Gastrocnemius medialis (tissue), 4 donors: ENCODE measurements at regions of chr6 and their contacts with region 1.

Region 1: GRCh38 chr6:117482240-117483003 is at the start of gene DCBLD1:
- DNase-seq: peak; percentile 32 to 61
- ATAC-seq: peak; percentile 73 to 83
- H3K4me3 ChIP-seq: peak within 1 kb of the TSS; percentile 65 to 95 (median 82)
- H3K27ac ChIP-seq: peak within 1 kb of the TSS; percentile 89 to 92 (median 91)
- H3K4me1 ChIP-seq: peaks cover 13 to 19% of the 10 kb centered on the region in 2 donors
- H3K27me3 ChIP-seq: no peaks in the 10 kb centered on the region
- CTCF ChIP-seq: peak in 1 of 5 experiments; percentile 26
- POLR2A ChIP-seq: peak; percentile 52 to 75
- total RNA-seq, gene DCBLD1: 4.3 to 8.1 (median 5.2) TPM

Region 2: GRCh38 chr6:117449549-117450439 is 32.6 kb before region 1 on chr6:
- in situ Hi-C with region 1: no loop called
- intact Hi-C with region 1: loop called (anchors 2 kb)
- DNase-seq: peak; percentile 6 to 12
- ATAC-seq: no peak
- H3K4me3 ChIP-seq: no peak overlapping the region
- H3K27ac ChIP-seq: no peak overlapping the region
- H3K4me1 ChIP-seq: peaks cover 0 to 6% of the 10 kb centered on the region in 2 donors
- H3K27me3 ChIP-seq: no peaks in the 10 kb centered on the region
- CTCF ChIP-seq: peak; percentile 52 to 78 (median 66)
- POLR2A ChIP-seq: no peak